Activated B cell treated with CpG ODN at 0.5 μM for 24 hours (primary cell): ENCODE measurements at regions of chr19 and their contacts with region 1.

Region 1: GRCh38 chr19:37979547-37980082 is 72.6 kb downstream of the SIPA1L3 start:
- DNase-seq: no peak
- ATAC-seq: peak; percentile 3
- H3K4me3 Mint-ChIP-seq: peak overlapping the region; percentile 60
- H3K27ac Mint-ChIP-seq: peak overlapping the region; percentile 90
- H3K4me1 Mint-ChIP-seq: peaks cover 95% of the 10 kb centered on the region
- H3K27me3 Mint-ChIP-seq: no peaks in the 10 kb centered on the region
- CTCF ChIP-seq: no peak

Region 2: DNA sequence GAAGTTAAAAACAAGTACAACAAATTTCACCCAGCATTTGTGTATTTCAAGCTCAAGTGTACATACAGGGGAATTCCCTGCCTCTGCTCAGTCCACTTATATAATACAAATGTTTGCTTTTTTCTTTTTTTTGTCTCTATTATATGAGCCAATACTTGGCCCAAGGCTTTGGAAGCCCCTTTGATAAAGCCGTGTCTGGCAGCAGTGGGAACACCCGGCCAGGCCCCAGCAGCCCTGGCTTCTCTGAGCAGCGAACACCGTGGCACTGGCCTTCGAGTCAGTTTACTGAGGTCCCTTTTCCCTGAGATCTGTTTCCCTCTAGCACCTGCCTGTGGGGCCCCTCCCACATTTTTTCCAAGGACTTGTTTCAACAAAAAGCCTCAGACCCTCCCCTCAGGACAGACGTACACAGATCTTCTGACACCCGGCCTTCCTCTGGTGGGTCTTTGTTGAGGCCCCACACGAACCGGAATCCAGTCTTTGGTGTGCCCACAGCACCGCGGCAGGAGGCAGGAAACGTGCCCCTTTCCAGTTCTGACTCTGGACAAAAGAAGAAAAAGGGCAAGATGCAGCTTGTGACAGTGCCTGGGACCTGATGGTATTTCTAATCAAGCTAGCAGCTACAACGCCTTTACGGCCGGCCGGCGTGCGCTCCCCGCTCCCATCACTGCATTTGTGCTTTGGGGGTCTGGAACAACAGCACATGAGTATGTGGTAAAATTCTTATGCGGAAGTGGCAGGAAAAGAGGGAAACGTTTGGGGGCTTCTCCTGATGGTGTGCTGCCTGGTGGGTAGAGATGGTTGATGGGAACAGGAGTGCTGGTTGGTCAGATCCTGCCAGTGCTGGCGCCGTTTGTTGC is 58.8 kb before region 1 on chr19:
- CTCF ChIA-PET with region 1: interaction called, 3 read pairs
- POLR2A ChIA-PET with region 1: interaction called, 28 read pairs
- intact Hi-C with region 1: no loop called
- DNase-seq: no peak
- ATAC-seq: peak; percentile 20
- H3K4me3 Mint-ChIP-seq: peak overlapping the region; percentile 78
- H3K27ac Mint-ChIP-seq: peak overlapping the region; percentile 90
- H3K4me1 Mint-ChIP-seq: peaks cover 82% of the 10 kb centered on the region
- H3K27me3 Mint-ChIP-seq: no peaks in the 10 kb centered on the region
- CTCF ChIP-seq: no peak

Region 3: GRCh38 chr19:37963190-37963936 is 16.3 kb before region 1 on chr19:
- CTCF ChIA-PET with region 1: no interaction called
- POLR2A ChIA-PET with region 1: interaction called, 14 read pairs
- intact Hi-C with region 1: loop called (anchors 2 kb)
- DNase-seq: no peak
- ATAC-seq: no peak
- H3K4me3 Mint-ChIP-seq: peak overlapping the region; percentile 4
- H3K27ac Mint-ChIP-seq: peak overlapping the region; percentile 88
- H3K4me1 Mint-ChIP-seq: peaks cover 80% of the 10 kb centered on the region
- H3K27me3 Mint-ChIP-seq: no peaks in the 10 kb centered on the region
- CTCF ChIP-seq: no peak

Region 4: GRCh38 chr19:38004521-38005223 is 25.1 kb after region 1 on chr19:
- CTCF ChIA-PET with region 1: interaction called, 9 read pairs
- POLR2A ChIA-PET with region 1: interaction called, 29 read pairs
- intact Hi-C with region 1: loop called (anchors 1 kb)
- DNase-seq: peak; percentile 34
- ATAC-seq: peak; percentile 60
- H3K4me3 Mint-ChIP-seq: no peak overlapping the region
- H3K27ac Mint-ChIP-seq: no peak overlapping the region
- H3K4me1 Mint-ChIP-seq: peaks cover 39% of the 10 kb centered on the region
- H3K27me3 Mint-ChIP-seq: no peaks in the 10 kb centered on the region
- CTCF ChIP-seq: no peak

Region 5: DNA sequence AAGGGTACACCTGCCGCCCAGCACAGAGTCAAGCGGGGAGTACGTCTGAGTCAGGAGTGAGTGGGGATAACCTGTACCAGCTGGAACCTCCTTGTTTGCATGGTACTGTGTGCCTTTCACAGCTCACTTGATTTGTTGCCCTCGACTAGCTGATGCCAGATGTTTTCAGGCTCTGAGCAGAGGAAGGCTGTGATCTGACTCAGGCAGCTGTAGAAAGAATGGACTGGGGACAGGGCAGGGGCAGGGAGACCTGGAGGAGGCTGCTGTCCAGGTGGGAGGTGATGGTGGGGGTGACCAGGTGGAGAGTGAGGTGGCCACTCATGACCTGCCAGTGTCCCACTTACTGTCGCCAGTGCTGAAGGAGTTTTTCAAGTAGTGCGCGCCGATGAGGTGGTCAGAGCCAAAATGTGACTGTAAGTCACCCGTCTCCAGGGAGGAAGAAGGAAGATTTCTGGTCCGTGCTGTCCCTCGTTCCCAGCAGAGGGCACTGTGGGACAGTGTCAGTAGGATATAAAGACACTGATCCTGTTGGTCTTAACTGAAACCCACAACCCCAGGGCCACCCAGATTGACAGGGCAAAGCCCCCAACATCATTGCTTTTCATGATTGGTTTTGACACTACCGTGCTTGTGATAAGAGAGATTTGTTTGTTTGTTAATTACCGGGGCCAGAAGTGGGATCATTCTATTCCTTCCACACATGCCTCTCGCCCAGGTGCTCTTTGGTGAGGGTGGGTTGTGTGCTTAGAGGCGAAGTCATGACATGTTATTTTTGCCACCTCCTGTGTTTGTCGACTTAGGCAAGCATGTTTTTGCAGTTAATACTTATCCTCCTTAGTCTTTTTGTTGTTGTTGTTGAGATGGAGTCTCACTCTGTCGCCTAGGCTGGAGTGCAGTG is 116.0 kb after region 1 on chr19:
- CTCF ChIA-PET with region 1: interaction called, 7 read pairs
- POLR2A ChIA-PET with region 1: no interaction called
- intact Hi-C with region 1: loop called (anchors 1 kb)
- DNase-seq: peak; percentile 59
- ATAC-seq: peak; percentile 85
- H3K4me3 Mint-ChIP-seq: no peak overlapping the region
- H3K27ac Mint-ChIP-seq: peak overlapping the region; percentile 85
- H3K4me1 Mint-ChIP-seq: peaks cover 18% of the 10 kb centered on the region
- H3K27me3 Mint-ChIP-seq: no peaks in the 10 kb centered on the region
- CTCF ChIP-seq: peak; percentile 33